ENCODE measurements at regions of chr4 and their contacts with region 1.

Region 1: GRCh38 chr4:121977251-121978171 is 25.7 kb upstream of the TRPC3 start:
- DNase-seq: no peak
- H3K4me3 ChIP-seq: no peak overlapping the region
- CTCF ChIP-seq: no peak

Region 2: DNA sequence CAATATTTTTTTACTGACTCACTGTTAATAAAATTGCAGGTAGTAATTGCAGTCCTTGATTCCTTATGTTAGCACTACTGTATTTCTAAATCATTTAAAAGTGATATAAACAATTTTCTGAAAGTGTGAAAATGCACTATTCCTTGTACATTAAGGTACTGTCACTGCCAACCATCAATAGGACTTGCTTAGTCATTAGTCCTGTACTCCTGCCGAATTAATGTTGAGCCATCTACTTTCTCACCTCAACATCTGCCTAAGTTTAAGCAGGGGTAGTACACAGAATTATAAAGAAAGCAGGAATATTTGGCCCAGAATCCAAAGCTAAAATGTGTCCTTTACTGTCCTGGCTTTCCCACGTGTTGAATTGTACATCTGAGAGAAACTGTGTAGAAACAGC is 61.4 kb after region 1 on chr4:
- in situ Hi-C with region 1: loop called (anchors 5 kb)
- DNase-seq: no peak
- H3K4me3 ChIP-seq: no peak overlapping the region
- CTCF ChIP-seq: no peak